SK-N-SH (cell line): ENCODE measurements at regions of chr3 and their contacts with region 1.

Region 1: DNA sequence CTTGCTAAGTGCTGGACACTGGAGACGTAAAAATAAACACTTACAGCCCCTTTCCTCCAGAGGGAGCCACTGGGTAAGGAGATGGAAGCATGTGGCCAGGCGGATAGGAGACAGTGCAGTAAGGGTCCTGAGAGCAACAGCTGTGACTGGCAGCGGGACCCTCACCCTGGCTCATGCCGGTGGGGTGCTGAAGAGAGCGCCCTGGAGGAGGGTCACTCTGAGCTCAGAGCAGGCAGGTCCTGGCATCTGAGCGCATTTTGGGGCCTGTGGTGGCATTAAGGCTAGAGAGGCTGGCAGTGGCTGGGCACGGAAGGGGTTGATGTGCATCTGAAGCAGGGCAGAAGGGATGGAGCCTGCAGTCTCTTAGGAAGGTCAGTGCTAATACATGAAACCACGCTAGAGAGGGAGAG is 16.0 kb downstream of the SEC61A1 start:
- DNase-seq: peak; percentile 77
- H3K4me3 ChIP-seq: peak overlapping the region in 1 of 2 experiments; percentile 39; a peak in 1 of 4 replicates
- H3K27ac ChIP-seq: no peak overlapping the region
- H3K4me1 ChIP-seq: peaks cover 0 to 21% of the 10 kb centered on the region in 2 experiments; a peak in 1 of 4 replicates
- H3K27me3 ChIP-seq: no peaks in the 10 kb centered on the region
- CTCF ChIP-seq: peak; percentile 73
- EP300 ChIP-seq: no peak
- RAD21 ChIP-seq: peak; percentile 54

Region 2: GRCh38 chr3:127808197-127808596 is 260.0 kb before region 1 on chr3:
- CTCF ChIA-PET with region 1: no interaction called
- POLR2A ChIA-PET with region 1: no interaction called
- DNase-seq: no peak
- H3K4me3 ChIP-seq: no peak overlapping the region
- H3K27ac ChIP-seq: no peak overlapping the region
- H3K4me1 ChIP-seq: peaks cover 3 to 8% of the 10 kb centered on the region in 2 experiments; a peak in 2 of 4 replicates
- H3K27me3 ChIP-seq: no peaks in the 10 kb centered on the region
- CTCF ChIP-seq: no peak
- EP300 ChIP-seq: no peak
- RAD21 ChIP-seq: no peak

Region 3: DNA sequence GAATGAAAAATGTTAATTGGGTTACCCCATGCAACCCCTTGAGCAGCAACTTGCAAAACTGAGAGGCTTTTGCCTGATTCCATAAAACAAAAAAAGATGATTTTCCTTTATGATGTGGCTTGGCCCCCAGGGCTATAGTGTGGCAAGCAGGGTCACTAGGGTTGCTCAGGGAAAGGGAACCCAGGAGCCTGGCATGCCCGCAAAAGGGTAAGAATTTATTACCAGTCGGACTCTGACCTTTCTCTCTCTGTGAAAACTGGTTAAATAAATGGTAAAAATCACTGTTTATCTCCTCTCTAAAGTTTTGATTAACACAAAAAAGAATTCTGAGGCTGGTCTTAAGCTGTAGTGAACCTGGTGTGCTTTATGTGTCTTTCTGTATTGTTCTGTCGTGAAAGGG is 53.7 kb before region 1 on chr3:
- CTCF ChIA-PET with region 1: no interaction called
- POLR2A ChIA-PET with region 1: no interaction called
- DNase-seq: no peak
- H3K4me3 ChIP-seq: no peak overlapping the region
- H3K27ac ChIP-seq: no peak overlapping the region
- H3K4me1 ChIP-seq: no peaks in the 10 kb centered on the region
- H3K27me3 ChIP-seq: no peaks in the 10 kb centered on the region
- CTCF ChIP-seq: no peak
- EP300 ChIP-seq: no peak
- RAD21 ChIP-seq: no peak

Region 4: GRCh38 chr3:128052595-128053351 is 15.4 kb before region 1 on chr3:
- CTCF ChIA-PET with region 1: interaction called, 19 read pairs
- POLR2A ChIA-PET with region 1: interaction called, 6 read pairs
- DNase-seq: no peak
- H3K4me3 ChIP-seq: peak overlapping the region; percentile 93 to 98
- H3K27ac ChIP-seq: peak overlapping the region; percentile 82 to 88
- H3K4me1 ChIP-seq: peaks cover 0 to 41% of the 10 kb centered on the region in 2 experiments; a peak in 2 of 4 replicates
- H3K27me3 ChIP-seq: no peaks in the 10 kb centered on the region
- CTCF ChIP-seq: no peak
- EP300 ChIP-seq: no peak
- RAD21 ChIP-seq: no peak

Region 5: GRCh38 chr3:128080320-128081080 is 12.3 kb after region 1 on chr3:
- CTCF ChIA-PET with region 1: interaction called, 17 read pairs
- POLR2A ChIA-PET with region 1: interaction called, 3 read pairs
- DNase-seq: no peak
- H3K4me3 ChIP-seq: no peak overlapping the region
- H3K27ac ChIP-seq: peak overlapping the region; percentile 39 to 85
- H3K4me1 ChIP-seq: peaks cover 0 to 18% of the 10 kb centered on the region in 2 experiments; a peak in 3 of 4 replicates
- H3K27me3 ChIP-seq: no peaks in the 10 kb centered on the region
- CTCF ChIP-seq: no peak
- EP300 ChIP-seq: 0 out of 4 replicates have a peak, but pooled peaks of 1 of the 2 experiments have one; percentile 50
- RAD21 ChIP-seq: no peak

Region 6: DNA sequence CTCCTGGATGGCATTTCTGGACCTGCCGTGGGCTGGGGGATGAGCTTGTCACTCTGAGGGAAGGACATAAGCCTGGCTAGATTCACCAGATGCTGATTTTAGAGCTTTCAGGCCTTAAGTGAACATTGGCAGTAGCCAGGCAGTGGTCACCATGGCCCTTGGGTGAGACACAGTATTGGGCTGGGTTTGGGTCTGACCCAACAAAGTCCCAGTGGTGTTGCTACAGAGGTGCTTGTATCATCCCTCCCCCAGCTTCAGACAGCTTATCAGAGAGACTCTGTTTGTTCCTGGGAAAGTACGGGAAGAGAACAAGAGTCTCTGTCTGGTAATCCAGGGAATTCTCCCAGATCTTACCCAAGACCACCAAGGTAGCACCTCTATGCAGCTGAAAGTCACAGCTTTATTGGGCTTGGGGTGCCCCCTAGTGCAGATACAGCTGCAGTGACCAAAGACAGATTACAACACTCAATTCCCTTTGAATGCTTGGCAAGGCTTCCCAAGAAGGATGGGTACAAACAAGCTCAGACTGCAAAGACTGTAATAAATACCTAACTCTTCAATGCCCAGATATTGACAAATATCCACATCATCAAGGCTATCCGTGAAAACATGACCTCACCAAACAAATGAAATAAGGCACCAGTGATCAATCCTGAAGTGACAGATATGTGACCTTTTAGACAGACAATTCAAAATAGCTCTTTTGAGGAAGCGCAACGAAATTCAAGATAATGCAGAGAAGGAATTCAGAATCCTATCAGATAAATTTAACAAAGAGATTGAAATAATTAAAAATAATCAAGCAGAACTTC is 65.3 kb after region 1 on chr3:
- CTCF ChIA-PET with region 1: interaction called, 21 read pairs
- POLR2A ChIA-PET with region 1: no interaction called
- DNase-seq: peak; percentile 44
- H3K4me3 ChIP-seq: no peak overlapping the region
- H3K27ac ChIP-seq: no peak overlapping the region
- H3K4me1 ChIP-seq: no peaks in the 10 kb centered on the region
- H3K27me3 ChIP-seq: no peaks in the 10 kb centered on the region
- CTCF ChIP-seq: peak; percentile 83
- EP300 ChIP-seq: no peak
- RAD21 ChIP-seq: peak; percentile 90